ENCODE measurements at regions of chr6 and their contacts with region 1.

Region 1: GRCh38 chr6:137571854-137572253 is 77.7 kb upstream of the OLIG3 start:
- DNase-seq: peak; percentile 30
- H3K27ac ChIP-seq: no peak overlapping the region
- CTCF ChIP-seq: peak; percentile 48

Region 2: DNA sequence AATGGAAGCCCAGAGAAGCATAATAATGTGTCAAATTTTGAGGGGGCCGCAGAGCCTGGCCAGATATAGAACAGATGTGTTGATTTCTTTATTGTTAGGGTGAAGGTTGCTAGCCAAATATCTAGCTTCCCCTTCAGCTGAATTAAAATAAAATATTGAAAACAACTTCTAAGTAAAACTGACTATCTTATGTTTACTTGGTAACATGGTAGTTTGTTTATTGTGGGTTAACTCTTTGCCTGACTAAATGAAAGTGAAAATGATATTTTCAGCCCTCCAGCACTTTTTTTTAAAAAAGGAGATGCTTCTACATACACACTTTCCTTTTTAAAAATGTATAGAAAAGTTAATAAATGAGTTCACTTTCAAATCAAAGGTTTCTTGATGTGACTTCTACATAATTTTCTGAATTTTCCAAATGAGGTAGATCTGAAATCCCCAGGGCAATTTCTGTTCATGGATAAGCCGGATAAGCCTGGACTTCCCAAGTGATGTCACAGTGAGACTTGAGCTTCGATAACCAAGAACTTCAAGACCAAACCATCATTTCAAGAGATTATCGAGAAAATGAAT is 94.4 kb after region 1 on chr6:
- CTCF ChIA-PET with region 1: no interaction called
- POLR2A ChIA-PET with region 1: no interaction called
- DNase-seq: no peak
- H3K27ac ChIP-seq: no peak overlapping the region
- CTCF ChIP-seq: no peak

Region 3: GRCh38 chr6:137680705-137681346 is 109.0 kb after region 1 on chr6:
- CTCF ChIA-PET with region 1: no interaction called
- POLR2A ChIA-PET with region 1: no interaction called
- DNase-seq: no peak
- H3K27ac ChIP-seq: no peak overlapping the region
- CTCF ChIP-seq: no peak

Region 4: DNA sequence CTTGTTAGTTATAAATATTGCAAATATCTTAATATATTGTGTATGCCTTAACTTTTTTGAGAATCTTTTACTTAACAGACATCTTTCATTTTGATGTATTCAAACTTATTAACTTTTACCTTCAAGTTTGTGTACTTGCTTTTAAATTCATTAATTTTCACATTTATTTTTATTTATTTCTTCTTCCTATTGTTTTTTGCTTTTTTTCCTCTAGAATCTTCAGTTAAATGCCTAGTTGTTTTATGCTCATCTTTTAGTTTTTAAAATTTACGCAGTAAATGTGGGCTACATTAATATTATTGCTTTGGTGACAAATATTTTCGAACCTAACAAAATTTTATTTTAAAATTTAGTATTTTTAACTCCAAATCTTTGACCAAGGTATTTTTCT is 384.2 kb after region 1 on chr6:
- CTCF ChIA-PET with region 1: interaction called, 10 read pairs
- POLR2A ChIA-PET with region 1: no interaction called
- DNase-seq: no peak
- H3K27ac ChIP-seq: no peak overlapping the region
- CTCF ChIP-seq: no peak